ENCODE measurements at regions of chr9 and their contacts with region 1.

Region 1: GRCh38 chr9:132973713-132974112 is 4.8 kb upstream of the GFI1B start:
- DNase-seq: peak in 2 of 3 donors; percentile 68 to 75
- H3K4me3 ChIP-seq: no peak overlapping the region
- H3K27ac ChIP-seq: no peak overlapping the region
- H3K4me1 ChIP-seq: peaks cover 8 to 36% (median 28%) of the 10 kb centered on the region in 4 experiments
- H3K27me3 ChIP-seq: no peaks in the 10 kb centered on the region

Region 2: DNA sequence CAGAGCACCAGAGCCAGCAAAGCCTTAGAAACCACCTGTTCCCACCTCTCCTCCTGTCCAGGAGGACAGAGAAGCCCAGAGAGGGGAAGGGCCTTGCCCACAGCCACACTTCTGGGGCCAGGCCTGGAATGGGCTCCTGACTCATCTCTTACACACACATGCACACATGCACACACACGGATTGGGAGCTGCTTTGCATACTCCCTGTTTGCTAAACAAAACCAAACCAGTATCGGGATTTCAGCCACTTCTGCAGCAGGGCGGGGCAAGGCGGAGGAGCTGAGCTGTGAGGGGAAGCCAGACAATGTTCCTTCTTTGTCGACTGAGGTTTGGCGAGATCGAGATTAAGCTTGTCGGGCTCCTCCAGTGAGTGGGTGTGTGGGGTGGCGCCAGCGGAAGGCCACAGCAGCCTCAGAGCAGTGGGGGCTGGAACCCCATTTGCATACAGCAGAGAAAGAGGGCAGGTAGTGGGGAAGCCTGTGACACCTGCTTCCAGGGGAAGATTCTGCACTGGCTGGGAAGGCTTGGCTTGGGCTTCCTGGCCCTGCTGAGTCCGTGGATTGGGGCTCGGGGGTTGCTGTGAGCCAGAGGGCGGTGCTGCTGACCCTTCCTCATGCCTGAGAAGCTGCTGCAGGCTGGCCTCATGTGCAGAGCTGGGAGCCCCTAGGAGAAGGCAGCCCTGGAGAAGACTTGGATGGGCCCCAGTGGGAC is 20.9 kb after region 1 on chr9:
- CTCF ChIA-PET with region 1: interaction called, 144 read pairs
- POLR2A ChIA-PET with region 1: interaction called, 6 read pairs
- DNase-seq: peak; percentile 69 to 88 (median 74)
- H3K4me3 ChIP-seq: peak overlapping the region in 3 of 7 experiments; percentile 25 to 39 (median 30)
- H3K27ac ChIP-seq: peak overlapping the region in 1 of 2 experiments; percentile 63
- H3K4me1 ChIP-seq: peaks cover 16 to 89% (median 79%) of the 10 kb centered on the region in 4 experiments
- H3K27me3 ChIP-seq: no peaks in the 10 kb centered on the region

Region 3: DNA sequence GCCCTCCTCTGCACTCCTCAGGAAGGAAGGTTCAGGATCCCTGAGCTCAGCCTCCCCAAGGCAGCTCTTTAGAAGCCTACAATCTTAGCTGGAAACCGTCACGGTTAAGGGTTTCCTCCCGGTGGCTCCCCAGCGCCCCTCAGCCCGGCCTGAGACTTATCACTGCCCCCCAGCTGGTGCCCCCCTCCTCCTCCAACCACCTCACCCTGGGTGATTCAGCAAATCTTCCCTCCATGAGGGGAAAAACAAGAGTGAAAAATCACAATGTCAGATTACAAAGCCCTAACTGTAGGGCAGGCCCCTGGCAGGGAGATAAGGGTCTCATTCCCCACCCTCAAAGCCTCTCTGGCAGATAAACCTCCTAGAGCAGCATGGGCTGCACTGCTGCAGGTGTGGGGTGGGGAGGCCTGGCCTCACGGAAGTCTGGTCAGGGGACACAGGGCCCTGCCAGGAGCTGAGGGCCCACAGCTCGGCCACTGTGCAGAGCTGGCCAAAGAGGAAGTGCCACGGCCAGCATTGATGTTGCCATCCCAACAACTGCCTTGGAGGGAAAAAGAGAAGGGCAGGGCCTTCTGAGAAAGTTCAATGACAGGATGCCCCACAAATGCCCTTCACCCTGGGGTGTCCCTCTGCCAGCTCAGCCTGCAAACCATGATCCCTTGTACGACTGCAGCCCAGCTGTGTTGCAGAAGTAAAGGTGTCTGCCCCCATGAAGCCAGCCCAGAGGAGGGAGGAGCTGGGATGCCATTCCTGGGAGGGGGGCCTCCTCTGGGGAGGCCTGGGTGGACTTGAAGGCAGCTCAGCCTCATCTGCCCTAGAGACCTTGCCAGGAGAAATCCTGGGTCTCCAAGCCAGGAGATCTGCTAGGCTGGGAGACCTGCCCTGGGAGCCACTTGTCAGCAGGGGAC is 30.6 kb after region 1 on chr9:
- CTCF ChIA-PET with region 1: interaction called, 144 read pairs
- POLR2A ChIA-PET with region 1: interaction called, 78 read pairs
- DNase-seq: peak; percentile 95 to 99 (median 98)
- H3K4me3 ChIP-seq: peak overlapping the region in 6 of 7 experiments; percentile 29 to 66 (median 35)
- H3K27ac ChIP-seq: peak overlapping the region; percentile 77 to 89
- H3K4me1 ChIP-seq: peaks cover 9 to 95% (median 84%) of the 10 kb centered on the region in 4 experiments
- H3K27me3 ChIP-seq: no peaks in the 10 kb centered on the region

Region 4: GRCh38 chr9:133030317-133031129 is 56.8 kb after region 1 on chr9 and contains the start of gene GTF3C5:
- CTCF ChIA-PET with region 1: interaction called, 89 read pairs
- POLR2A ChIA-PET with region 1: no interaction called
- DNase-seq: peak; percentile 99
- H3K4me3 ChIP-seq: peak within 1 kb of the TSS; percentile 91 to 100 (median 92)
- H3K27ac ChIP-seq: peak within 1 kb of the TSS; percentile 83 to 93
- H3K4me1 ChIP-seq: peaks cover 5 to 37% (median 30%) of the 10 kb centered on the region in 4 experiments
- H3K27me3 ChIP-seq: no peaks in the 10 kb centered on the region

Region 5: DNA sequence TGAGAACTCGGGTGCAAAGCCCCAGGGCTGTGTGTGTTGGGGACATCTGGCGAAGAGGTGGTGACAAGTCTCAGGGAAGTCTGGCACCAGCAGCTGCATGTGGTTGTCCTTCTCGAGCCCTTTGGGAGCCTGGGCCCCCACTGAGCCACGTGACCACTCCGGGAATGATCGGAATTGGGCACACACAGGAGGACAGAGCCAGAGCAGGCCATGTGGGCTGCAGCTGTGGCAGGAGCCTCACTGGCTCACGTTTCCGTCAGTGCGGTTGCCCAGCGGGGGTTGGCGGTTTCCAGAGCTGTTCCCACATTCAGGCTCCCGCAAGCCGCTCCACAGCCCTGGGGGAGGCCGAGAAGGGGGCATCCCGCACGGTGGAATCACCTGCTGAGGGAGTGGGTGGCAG is 81.3 kb after region 1 on chr9:
- CTCF ChIA-PET with region 1: no interaction called
- POLR2A ChIA-PET with region 1: no interaction called
- DNase-seq: no peak
- H3K4me3 ChIP-seq: no peak overlapping the region
- H3K27ac ChIP-seq: no peak overlapping the region
- H3K4me1 ChIP-seq: peaks cover 5 to 43% (median 41%) of the 10 kb centered on the region in 4 experiments
- H3K27me3 ChIP-seq: no peaks in the 10 kb centered on the region